Left ventricle myocardium superior (tissue), 1 donor: ENCODE measurements at regions of chr4 and their contacts with region 1.

Region 1: DNA sequence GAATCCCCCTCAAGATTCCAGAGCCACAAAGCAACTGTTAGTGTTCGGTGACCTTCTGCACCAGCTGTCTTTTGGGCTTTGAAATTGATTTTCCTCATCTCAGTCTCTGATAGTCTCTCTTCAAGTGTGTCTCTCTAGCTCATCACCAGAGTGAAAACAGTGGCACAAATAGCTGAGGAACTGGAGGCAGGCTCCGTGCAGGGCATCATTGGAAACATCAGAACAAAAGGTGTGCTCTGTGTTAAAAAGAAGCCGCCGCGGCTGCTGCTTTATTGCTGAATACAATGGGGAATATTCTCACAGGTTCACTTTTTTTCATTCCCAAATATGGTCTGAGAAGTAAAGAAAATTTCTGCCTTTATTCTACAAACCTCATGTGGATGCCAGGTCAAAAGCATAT is 297.5 kb downstream of the DCTD start:
- DNase-seq: no peak
- ATAC-seq: no peak

Region 2: DNA sequence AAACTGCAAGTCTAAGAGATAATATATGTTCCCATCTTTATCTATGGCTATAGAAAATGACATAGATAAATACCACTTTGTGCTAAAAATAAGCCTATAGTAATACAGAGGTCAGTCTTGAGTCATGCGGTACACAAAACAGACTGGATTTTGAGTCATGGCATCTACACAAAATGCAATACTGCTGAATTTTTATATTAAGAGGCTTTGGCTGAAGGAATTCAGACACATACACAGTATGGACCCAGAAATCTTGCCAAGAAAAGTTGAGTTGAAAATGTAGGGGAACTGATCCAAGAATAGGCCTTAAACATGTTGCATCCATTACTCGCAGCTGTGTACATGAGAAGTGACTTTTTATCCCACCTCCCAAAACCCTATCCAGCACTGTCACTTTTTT is 192.1 kb before region 1 on chr4:
- intact Hi-C with region 1: no loop called
- DNase-seq: no peak
- ATAC-seq: no peak

Region 3: DNA sequence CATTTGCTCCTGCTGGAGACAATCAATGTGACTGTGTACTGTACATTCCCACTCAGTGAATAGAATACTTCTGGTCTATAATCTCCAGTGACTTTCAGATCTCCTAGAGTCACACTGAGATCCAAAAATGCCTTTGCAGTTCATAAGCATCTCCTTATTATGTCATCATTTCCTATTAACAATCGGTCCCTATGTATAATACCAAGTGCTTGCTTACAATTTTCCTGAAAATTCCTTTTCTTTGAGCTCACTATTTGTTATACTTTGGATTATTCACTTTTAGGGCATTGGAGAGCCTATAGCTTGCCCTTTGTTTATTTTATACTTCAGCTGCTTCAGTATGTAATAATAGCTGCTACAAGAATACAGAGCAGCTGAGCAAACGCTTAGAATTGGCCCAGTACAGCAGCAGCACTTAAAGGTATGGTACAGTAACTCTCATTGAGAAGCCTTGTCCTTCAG is 15.5 kb before region 1 on chr4:
- intact Hi-C with region 1: loop called (anchors 1 kb)
- DNase-seq: no peak
- ATAC-seq: no peak